ENCODE measurements at regions of chr11 and their contacts with region 1.

Region 1: GRCh38 chr11:44621140-44621681 is 55.7 kb downstream of the CD82 start:
- DNase-seq: peak in 33 of 35 experiments; percentile 15 to 73 (median 49)
- ATAC-seq: peak; percentile 57 to 72 (median 60)
- H3K4me3 ChIP-seq: no peak overlapping the region
- H3K4me3 Mint-ChIP-seq: no peak overlapping the region
- H3K27ac ChIP-seq: no peak overlapping the region
- H3K27ac Mint-ChIP-seq: no peak overlapping the region
- H3K4me1 ChIP-seq: peaks cover 5 to 32% of the 10 kb centered on the region in 2 experiments
- H3K4me1 Mint-ChIP-seq: peaks cover 21 to 37% (median 35%) of the 10 kb centered on the region in 3 donors
- H3K27me3 ChIP-seq: no peaks in the 10 kb centered on the region
- H3K27me3 Mint-ChIP-seq: no peaks in the 10 kb centered on the region

Region 2: GRCh38 chr11:44536788-44537516 is 84.3 kb before region 1 on chr11:
- CTCF ChIA-PET with region 1: interaction called in 1 of 2 experiments, 12 read pairs
- POLR2A ChIA-PET with region 1: no interaction called
- DNase-seq: no peak
- ATAC-seq: no peak
- H3K4me3 ChIP-seq: no peak overlapping the region
- H3K4me3 Mint-ChIP-seq: no peak overlapping the region
- H3K27ac ChIP-seq: no peak overlapping the region
- H3K27ac Mint-ChIP-seq: no peak overlapping the region
- H3K4me1 ChIP-seq: peaks cover 0 to 7% of the 10 kb centered on the region in 2 experiments
- H3K4me1 Mint-ChIP-seq: peaks cover 0 to 1% (median 0%) of the 10 kb centered on the region in 3 donors
- H3K27me3 ChIP-seq: peaks cover 0 to 15% of the 10 kb centered on the region in 2 experiments
- H3K27me3 Mint-ChIP-seq: peaks cover 0 to 3% of the 10 kb centered on the region in 2 donors

Region 3: DNA sequence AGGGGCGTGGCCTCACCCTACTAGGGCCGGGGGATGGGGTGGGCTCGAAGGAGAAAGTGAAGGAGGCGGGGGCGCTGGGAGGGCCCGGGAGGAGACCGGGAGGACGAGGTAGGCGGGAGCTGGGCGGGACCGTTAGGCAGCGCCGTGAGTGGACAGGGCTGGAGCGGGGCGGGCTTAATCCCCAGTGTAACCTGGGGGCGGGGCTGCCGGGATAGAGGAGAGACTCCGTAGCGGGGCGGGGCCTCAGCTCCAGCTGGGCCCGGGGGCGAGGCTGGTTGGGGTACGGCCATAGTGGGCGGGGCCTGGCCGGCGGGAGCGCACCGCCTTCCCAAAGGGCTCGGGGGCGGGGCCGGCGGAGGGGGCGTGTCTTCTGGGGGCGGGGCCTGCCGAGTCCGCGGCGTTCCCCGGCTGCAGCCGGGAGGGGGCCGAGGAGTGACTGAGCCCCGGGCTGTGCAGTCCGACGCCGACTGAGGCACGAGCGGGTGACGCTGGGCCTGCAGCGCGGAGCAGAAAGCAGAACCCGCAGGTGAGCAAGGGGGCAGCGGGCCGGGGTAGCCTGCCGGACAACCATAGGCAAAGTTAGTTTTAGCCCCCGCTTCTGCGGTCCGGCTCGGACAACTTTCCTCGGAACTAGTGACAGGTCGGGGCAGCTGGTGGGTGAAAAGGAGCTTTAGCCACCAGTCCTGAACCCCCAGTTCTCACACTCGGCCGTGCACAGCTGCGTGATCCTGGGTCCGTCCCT is 55.8 kb before region 1 on chr11 and contains the start of gene CD82:
- CTCF ChIA-PET with region 1: interaction called, 3 to 10 read pairs
- POLR2A ChIA-PET with region 1: interaction called in 1 of 2 experiments, 7 read pairs
- DNase-seq: peak; percentile 78 to 98 (median 87)
- ATAC-seq: peak; percentile 81 to 84 (median 83)
- H3K4me3 ChIP-seq: peak within 1 kb of the TSS; percentile 85 to 89
- H3K4me3 Mint-ChIP-seq: peak within 1 kb of the TSS; percentile 81 to 88 (median 83)
- H3K27ac ChIP-seq: peak within 1 kb of the TSS; percentile 82
- H3K27ac Mint-ChIP-seq: peak within 1 kb of the TSS; percentile 80 to 81
- H3K4me1 ChIP-seq: peaks cover 38 to 58% of the 10 kb centered on the region in 2 experiments
- H3K4me1 Mint-ChIP-seq: peaks cover 39 to 60% (median 46%) of the 10 kb centered on the region in 3 donors
- H3K27me3 ChIP-seq: no peaks in the 10 kb centered on the region
- H3K27me3 Mint-ChIP-seq: no peaks in the 10 kb centered on the region
- total RNA-seq, gene CD82: 53.4 to 99.6 (median 69.0) TPM

Region 4: DNA sequence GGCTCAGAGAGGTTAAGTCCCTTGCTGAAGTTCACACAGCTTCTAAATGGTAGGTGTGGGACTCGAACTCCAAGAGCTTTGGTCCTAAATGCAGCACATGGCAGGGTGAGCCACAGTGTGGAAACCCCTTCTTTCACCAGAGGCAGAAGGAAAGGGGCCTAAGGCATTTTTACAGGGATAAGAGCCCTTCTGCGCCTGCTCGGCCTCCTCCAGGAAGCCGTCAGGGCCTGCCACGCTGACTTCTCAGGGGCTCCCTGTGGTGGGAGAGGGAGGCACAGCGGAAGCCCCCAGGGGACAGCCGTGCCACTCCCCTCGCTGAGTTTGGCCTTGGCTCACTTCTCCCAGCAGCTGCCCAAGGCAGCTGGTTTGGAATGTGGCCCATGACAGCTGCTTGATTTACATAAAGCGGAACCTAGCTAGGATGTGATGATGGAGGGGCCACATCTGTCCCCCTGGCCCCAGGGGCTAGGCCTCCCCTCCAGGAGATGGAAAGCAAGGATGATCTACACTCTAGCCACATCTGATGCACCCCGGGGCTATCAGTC is 20.3 kb before region 1 on chr11:
- CTCF ChIA-PET with region 1: interaction called, 7 to 13 read pairs
- POLR2A ChIA-PET with region 1: no interaction called
- DNase-seq: no peak
- ATAC-seq: no peak
- H3K4me3 ChIP-seq: no peak overlapping the region
- H3K4me3 Mint-ChIP-seq: no peak overlapping the region
- H3K27ac ChIP-seq: peak overlapping the region; percentile 28
- H3K27ac Mint-ChIP-seq: peak overlapping the region; percentile 64 to 83
- H3K4me1 ChIP-seq: peaks cover 15 to 56% of the 10 kb centered on the region in 2 experiments
- H3K4me1 Mint-ChIP-seq: peaks cover 25 to 66% (median 31%) of the 10 kb centered on the region in 3 donors
- H3K27me3 ChIP-seq: no peaks in the 10 kb centered on the region
- H3K27me3 Mint-ChIP-seq: no peaks in the 10 kb centered on the region

Region 5: GRCh38 chr11:44694443-44694842 is 73.2 kb after region 1 on chr11:
- CTCF ChIA-PET with region 1: no interaction called
- POLR2A ChIA-PET with region 1: no interaction called
- DNase-seq: peak in 1 of 35 experiments; percentile 17
- ATAC-seq: peak in 2 of 4 experiments; percentile 20 to 59
- H3K4me3 ChIP-seq: no peak overlapping the region
- H3K4me3 Mint-ChIP-seq: peak overlapping the region in 1 of 3 donors; percentile 39
- H3K27ac ChIP-seq: no peak overlapping the region
- H3K27ac Mint-ChIP-seq: peak overlapping the region; percentile 41 to 76
- H3K4me1 ChIP-seq: peaks cover 0 to 10% of the 10 kb centered on the region in 2 experiments
- H3K4me1 Mint-ChIP-seq: peaks cover 12 to 13% (median 13%) of the 10 kb centered on the region in 3 donors
- H3K27me3 ChIP-seq: peaks cover 0 to 3% of the 10 kb centered on the region in 2 experiments
- H3K27me3 Mint-ChIP-seq: peaks cover 3 to 4% of the 10 kb centered on the region in 2 donors

Region 6: DNA sequence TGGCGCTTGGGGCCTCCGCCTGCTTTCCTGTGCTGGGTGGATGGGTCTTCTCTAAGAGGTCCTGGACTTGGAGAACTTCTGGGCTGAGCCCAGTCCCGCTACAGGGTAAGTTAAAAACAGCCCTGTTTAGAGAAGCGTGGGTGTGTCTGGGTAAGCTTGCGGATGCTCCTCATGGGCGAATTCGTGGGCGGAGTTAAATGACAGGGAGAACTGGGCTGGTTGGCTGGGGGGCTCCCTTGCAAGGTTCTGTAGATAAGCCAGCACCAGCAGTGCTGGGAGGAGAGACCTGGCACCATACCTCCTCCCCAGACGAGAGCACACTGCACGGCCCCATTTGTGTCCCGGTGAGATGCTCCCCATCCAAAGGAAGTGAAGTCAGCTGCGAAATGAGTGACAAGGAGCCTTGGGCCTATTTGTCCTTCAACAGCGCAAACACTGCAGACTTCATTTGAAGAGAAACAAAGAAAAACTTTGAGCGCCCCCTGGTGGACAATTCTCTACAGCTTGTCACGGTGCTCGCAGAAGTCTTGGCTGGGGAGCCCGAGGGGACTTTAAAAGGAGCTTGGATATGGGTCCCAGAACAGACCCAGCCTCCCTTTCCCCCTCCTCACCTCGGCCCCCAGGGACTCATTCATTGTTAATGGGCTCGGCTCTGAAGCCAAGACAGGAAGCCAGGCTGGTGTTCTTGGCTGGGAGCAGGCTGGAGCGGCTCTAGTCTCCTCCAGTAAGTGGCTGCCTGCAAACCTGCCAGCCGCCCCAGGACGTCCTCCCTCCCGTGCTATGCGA is 290.0 kb after region 1 on chr11:
- CTCF ChIA-PET with region 1: interaction called, 5 to 23 read pairs
- POLR2A ChIA-PET with region 1: no interaction called
- DNase-seq: peak; percentile 29 to 90 (median 76)
- ATAC-seq: peak; percentile 70 to 87 (median 80)
- H3K4me3 ChIP-seq: no peak overlapping the region
- H3K4me3 Mint-ChIP-seq: no peak overlapping the region
- H3K27ac ChIP-seq: no peak overlapping the region
- H3K27ac Mint-ChIP-seq: peak overlapping the region; percentile 12 to 39
- H3K4me1 ChIP-seq: peaks cover 0 to 8% of the 10 kb centered on the region in 2 experiments
- H3K4me1 Mint-ChIP-seq: peaks cover 4 to 19% (median 11%) of the 10 kb centered on the region in 3 donors
- H3K27me3 ChIP-seq: peaks cover 0 to 9% of the 10 kb centered on the region in 2 experiments
- H3K27me3 Mint-ChIP-seq: no peaks in the 10 kb centered on the region